GM13977 (cell line): ENCODE measurements at regions of chr12 and their contacts with region 1.

Region 1: GRCh38 chr12:69196302-69197288 is 42.8 kb upstream of the CPSF6 start:
- DNase-seq: no peak
- CTCF ChIP-seq: peak; percentile 30

Region 2: GRCh38 chr12:69068431-69068830 is 128.2 kb before region 1 on chr12:
- in situ Hi-C with region 1: no loop called
- DNase-seq: no peak
- CTCF ChIP-seq: no peak

Region 3: DNA sequence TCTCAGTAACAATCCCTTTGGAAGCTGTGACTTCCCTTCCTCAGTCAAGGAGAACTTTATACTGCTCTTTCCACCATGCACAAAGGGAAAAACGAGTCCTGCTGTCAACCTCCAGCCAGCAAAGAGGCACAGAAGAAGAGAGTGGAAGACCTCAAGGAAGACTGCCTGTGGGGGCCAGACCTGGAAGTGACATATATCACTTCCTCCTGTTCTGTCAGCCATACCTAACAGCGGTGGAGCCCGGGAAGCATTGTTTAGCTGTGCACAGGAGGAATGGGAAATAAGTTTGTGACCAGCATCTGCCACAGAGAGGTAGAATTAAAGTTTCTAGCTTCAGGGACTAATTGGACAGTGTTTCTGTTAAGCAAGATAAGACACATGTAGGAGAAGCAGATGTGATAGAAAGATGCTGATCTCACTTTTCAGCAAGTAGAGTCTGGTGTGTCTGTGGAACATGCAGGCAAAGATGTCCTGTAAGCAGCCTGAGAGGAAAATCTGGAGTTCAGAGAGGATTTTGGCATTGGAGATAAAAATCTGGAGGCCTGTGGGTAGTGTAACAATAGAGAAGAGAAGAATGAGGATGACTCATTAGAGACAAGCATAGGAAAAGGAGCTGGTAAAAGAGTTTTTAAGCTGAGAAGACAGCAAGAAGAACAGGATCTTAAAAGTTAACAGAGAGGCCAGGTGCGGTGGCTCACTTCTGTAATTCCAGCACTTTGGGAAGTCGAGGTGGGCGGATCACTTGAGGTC is 98.8 kb before region 1 on chr12:
- in situ Hi-C with region 1: loop called (anchors 25 kb)
- DNase-seq: no peak
- CTCF ChIP-seq: no peak

Region 4: DNA sequence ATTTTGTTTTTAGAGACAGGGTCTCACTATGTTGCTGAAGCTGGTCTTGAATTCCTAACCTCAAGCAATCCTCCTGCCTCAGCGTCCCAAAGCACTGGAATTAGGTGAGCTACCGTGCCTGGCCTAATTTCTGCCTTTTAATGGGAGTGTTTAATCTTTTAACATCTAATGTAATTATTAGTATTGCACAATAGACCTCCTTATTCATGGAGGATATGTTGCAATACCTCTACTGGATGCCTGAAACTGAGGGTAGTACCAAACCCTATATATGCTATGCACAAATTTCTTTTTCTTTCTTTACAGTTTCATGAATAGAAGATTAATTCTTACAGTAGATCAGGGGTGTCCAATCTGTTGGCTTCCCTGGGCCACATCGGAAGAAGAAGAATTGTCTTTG is 676.2 kb after region 1 on chr12:
- in situ Hi-C with region 1: no loop called
- DNase-seq: no peak
- CTCF ChIP-seq: no peak